PC-9 (cell line): ENCODE measurements at regions of chr2 and their contacts with region 1.

Region 1: GRCh38 chr2:74198461-74199274 is at the start of gene MTHFD2:
- DNase-seq: peak; percentile 93 to 97
- H3K4me3 ChIP-seq: peak within 1 kb of the TSS; percentile 94
- H3K27ac ChIP-seq: peak within 1 kb of the TSS; percentile 97
- H3K4me1 ChIP-seq: peaks cover 34% of the 10 kb centered on the region
- H3K27me3 ChIP-seq: no peaks in the 10 kb centered on the region
- CTCF ChIP-seq: peak; percentile 85
- total RNA-seq, gene MTHFD2: 192 and 197 TPM in 2 replicates

Region 2: DNA sequence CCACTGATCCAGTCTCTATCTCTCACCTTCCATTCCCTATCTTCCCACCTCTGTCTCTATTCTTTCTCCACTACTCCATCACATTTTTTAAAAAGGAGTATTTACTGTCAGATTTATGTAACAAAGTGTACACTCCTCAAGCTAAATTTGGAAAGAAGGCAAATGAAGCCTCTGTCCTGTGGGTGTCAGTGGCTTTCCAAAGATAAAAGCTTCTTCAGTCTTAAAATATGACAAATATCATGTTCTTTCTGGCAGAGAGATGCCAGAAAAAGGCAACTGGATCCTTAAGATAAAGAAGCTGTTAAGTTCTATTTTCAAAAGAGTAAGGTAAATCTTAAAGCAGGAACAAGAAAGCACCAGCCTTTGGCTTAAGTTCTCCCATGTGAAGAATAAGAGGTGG is 425.8 kb before region 1 on chr2:
- CTCF ChIA-PET with region 1: no interaction called
- POLR2A ChIA-PET with region 1: interaction called, 17 read pairs
- intact Hi-C with region 1: no loop called
- DNase-seq: no peak
- H3K4me3 ChIP-seq: no peak overlapping the region
- H3K27ac ChIP-seq: no peak overlapping the region
- H3K4me1 ChIP-seq: no peaks in the 10 kb centered on the region
- H3K27me3 ChIP-seq: no peaks in the 10 kb centered on the region
- CTCF ChIP-seq: no peak

Region 3: GRCh38 chr2:74178201-74179062 is 20.2 kb before region 1 on chr2 and contains the start of gene MOB1A:
- CTCF ChIA-PET with region 1: no interaction called
- POLR2A ChIA-PET with region 1: interaction called, 7 read pairs
- intact Hi-C with region 1: loop called (anchors 1 kb)
- DNase-seq: peak; percentile 95 to 98
- H3K4me3 ChIP-seq: peak within 1 kb of the TSS; percentile 84
- H3K27ac ChIP-seq: peak within 1 kb of the TSS; percentile 76
- H3K4me1 ChIP-seq: peaks cover 21% of the 10 kb centered on the region
- H3K27me3 ChIP-seq: no peaks in the 10 kb centered on the region
- CTCF ChIP-seq: no peak
- total RNA-seq, gene MOB1A: 138 and 143 TPM in 2 replicates